ENCODE measurements at regions of chr9 and their contacts with region 1.

Region 1: GRCh38 chr9:134067904-134068743 is at the start of gene BRD3:
- DNase-seq: peak; percentile 60 to 95 (median 80)
- ATAC-seq: peak; percentile 77
- H3K4me3 ChIP-seq: peak within 1 kb of the TSS; percentile 74 to 89
- H3K4me3 Mint-ChIP-seq: peak within 1 kb of the TSS; percentile 87
- H3K27ac ChIP-seq: peak within 1 kb of the TSS; percentile 87 to 90
- H3K27ac Mint-ChIP-seq: peak within 1 kb of the TSS; percentile 96
- H3K4me1 ChIP-seq: peaks cover 12% of the 10 kb centered on the region
- H3K4me1 Mint-ChIP-seq: peaks cover 32% of the 10 kb centered on the region
- H3K27me3 ChIP-seq: peaks cover 4% of the 10 kb centered on the region in 2 experiments
- H3K27me3 Mint-ChIP-seq: peaks cover 21% of the 10 kb centered on the region
- CTCF ChIP-seq: no peak
- total RNA-seq, gene BRD3: 34.3 to 41.4 TPM

Region 2: GRCh38 chr9:133121198-133121939 is 946.8 kb before region 1 on chr9 and contains the start of gene RALGDS:
- CTCF ChIA-PET with region 1: no interaction called
- POLR2A ChIA-PET with region 1: no interaction called
- intact Hi-C with region 1: loop called in 1 of 2 experiments (anchors 2 kb)
- DNase-seq: peak; percentile 84 to 95 (median 92)
- ATAC-seq: peak; percentile 83
- H3K4me3 ChIP-seq: peak within 1 kb of the TSS; percentile 41 to 53
- H3K4me3 Mint-ChIP-seq: peak within 1 kb of the TSS; percentile 84
- H3K27ac ChIP-seq: peak within 1 kb of the TSS; percentile 66 to 96
- H3K27ac Mint-ChIP-seq: peak within 1 kb of the TSS; percentile 98
- H3K4me1 ChIP-seq: peaks cover 63% of the 10 kb centered on the region
- H3K4me1 Mint-ChIP-seq: peaks cover 70% of the 10 kb centered on the region
- H3K27me3 ChIP-seq: no peaks in the 10 kb centered on the region
- H3K27me3 Mint-ChIP-seq: no peaks in the 10 kb centered on the region
- CTCF ChIP-seq: no peak
- total RNA-seq, gene RALGDS: 177 to 186 TPM

Region 3: DNA sequence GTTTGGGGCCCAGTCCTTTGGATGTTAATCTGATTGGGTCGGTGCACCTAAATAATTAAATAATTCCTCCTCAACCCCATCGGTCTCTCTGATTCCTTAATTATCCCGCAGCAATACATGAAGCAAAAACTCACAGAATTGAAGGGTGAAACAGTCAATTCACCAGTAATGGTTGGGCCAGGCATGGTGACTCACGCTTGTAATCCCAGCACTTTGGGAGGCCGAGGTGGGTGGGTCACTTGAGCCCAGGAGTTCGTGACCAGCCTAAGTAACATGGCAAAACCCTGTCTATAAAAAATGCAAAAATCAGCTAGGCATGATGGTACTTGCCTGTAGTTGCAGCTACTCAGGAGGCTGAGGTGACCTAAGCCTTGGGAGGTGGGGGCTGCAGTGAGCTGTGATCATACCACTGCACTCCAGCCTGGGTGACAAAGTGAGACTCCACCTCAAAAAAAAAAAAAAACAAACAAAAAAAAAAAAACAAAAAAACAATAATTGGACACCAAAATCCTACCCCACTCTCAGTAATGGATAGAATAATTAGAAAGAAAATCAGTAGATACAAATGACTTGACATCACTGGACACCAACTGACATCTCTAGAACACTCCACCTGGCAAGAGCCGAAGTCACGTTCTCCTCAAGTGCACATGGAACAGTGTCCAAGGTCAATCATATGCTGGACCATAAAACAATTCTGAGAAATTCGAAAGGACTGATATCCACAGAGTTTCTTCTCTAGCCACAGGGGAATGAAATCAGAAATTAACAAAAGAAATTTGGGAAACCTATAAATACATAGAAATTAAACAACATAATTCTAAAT is 798.4 kb before region 1 on chr9:
- CTCF ChIA-PET with region 1: no interaction called
- POLR2A ChIA-PET with region 1: no interaction called
- intact Hi-C with region 1: no loop called
- DNase-seq: no peak
- ATAC-seq: no peak
- H3K4me3 ChIP-seq: no peak overlapping the region
- H3K4me3 Mint-ChIP-seq: no peak overlapping the region
- H3K27ac ChIP-seq: no peak overlapping the region
- H3K27ac Mint-ChIP-seq: no peak overlapping the region
- H3K4me1 ChIP-seq: peaks cover 6% of the 10 kb centered on the region
- H3K4me1 Mint-ChIP-seq: no peaks in the 10 kb centered on the region
- H3K27me3 ChIP-seq: no peaks in the 10 kb centered on the region
- H3K27me3 Mint-ChIP-seq: peaks cover 37% of the 10 kb centered on the region
- CTCF ChIP-seq: no peak

Region 4: DNA sequence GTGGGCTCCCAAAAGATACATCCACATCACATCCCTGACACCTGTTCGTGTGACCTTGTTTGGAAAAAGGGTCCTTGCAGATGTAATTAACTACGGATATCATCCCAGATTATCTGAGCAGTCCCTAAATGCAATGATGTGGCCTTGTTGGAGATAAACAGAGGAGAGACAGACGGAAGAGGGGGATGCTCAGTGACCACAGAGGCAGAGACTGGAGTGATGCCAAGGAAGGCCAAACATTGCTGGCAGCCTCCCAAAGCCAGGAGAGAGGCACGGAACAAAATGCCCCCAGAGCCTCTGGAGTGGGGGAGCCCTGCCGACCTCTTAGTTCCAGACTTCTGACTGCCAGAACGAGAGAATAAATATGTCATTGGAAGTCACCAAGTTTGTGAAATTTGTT is 61.0 kb before region 1 on chr9:
- CTCF ChIA-PET with region 1: no interaction called
- POLR2A ChIA-PET with region 1: no interaction called
- intact Hi-C with region 1: no loop called
- DNase-seq: no peak
- ATAC-seq: no peak
- H3K4me3 ChIP-seq: no peak overlapping the region
- H3K4me3 Mint-ChIP-seq: no peak overlapping the region
- H3K27ac ChIP-seq: no peak overlapping the region
- H3K27ac Mint-ChIP-seq: no peak overlapping the region
- H3K4me1 ChIP-seq: no peaks in the 10 kb centered on the region
- H3K4me1 Mint-ChIP-seq: no peaks in the 10 kb centered on the region
- H3K27me3 ChIP-seq: peaks cover 0 to 2% of the 10 kb centered on the region in 2 experiments
- H3K27me3 Mint-ChIP-seq: peaks cover 4% of the 10 kb centered on the region
- CTCF ChIP-seq: no peak

Region 5: DNA sequence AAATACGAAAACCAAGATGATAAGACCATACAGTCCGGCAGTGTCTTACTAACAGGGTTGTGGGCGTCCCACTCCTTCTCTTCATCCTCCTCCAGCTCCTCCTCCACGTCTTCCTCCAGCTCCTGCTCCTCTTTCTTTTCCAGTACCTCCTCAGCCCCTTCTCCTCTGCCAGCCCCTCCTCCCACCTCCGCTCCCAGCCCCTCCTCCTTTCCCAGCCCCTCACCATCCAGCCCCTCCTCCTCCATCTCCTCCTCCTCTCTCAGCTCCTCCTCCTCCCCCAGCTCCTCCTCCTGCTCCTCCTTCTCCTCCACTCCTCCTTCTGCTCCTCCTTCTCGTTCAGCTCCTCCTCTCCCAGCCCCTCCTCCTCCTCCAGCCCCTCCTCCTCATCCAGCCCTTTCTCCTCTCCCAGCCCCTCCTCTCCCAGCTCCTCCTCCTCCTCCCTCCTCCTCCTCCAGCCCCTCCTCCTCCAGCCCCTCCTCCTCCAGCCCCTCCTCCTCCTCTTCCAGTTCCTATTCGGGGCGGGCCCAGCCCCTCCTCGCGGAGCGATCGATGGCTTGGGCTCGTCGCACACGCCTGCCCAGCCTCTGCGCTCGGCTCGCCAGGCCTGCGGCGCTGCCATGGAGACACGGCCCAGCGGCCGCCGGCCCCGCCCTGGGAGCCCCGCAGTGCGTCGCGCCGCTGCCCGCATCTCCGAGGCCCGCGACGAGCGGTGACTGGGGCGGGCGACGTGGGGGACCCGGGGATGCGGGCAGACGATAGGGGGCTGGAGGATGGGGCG is 43.1 kb before region 1 on chr9 and contains the start of gene BRD3OS:
- CTCF ChIA-PET with region 1: no interaction called
- POLR2A ChIA-PET with region 1: interaction called, 12 read pairs
- intact Hi-C with region 1: loop called (anchors 1 kb)
- DNase-seq: peak; percentile 81 to 98 (median 90)
- ATAC-seq: peak; percentile 96
- H3K4me3 ChIP-seq: peak within 1 kb of the TSS; percentile 71 to 92
- H3K4me3 Mint-ChIP-seq: peak within 1 kb of the TSS; percentile 80
- H3K27ac ChIP-seq: peak within 1 kb of the TSS; percentile 56 to 65
- H3K27ac Mint-ChIP-seq: peak within 1 kb of the TSS; percentile 45
- H3K4me1 ChIP-seq: peaks cover 11% of the 10 kb centered on the region
- H3K4me1 Mint-ChIP-seq: peaks cover 11% of the 10 kb centered on the region
- H3K27me3 ChIP-seq: no peaks in the 10 kb centered on the region
- H3K27me3 Mint-ChIP-seq: no peaks in the 10 kb centered on the region
- CTCF ChIP-seq: no peak
- total RNA-seq, gene BRD3OS: 3.3 to 4.2 TPM

Region 6: DNA sequence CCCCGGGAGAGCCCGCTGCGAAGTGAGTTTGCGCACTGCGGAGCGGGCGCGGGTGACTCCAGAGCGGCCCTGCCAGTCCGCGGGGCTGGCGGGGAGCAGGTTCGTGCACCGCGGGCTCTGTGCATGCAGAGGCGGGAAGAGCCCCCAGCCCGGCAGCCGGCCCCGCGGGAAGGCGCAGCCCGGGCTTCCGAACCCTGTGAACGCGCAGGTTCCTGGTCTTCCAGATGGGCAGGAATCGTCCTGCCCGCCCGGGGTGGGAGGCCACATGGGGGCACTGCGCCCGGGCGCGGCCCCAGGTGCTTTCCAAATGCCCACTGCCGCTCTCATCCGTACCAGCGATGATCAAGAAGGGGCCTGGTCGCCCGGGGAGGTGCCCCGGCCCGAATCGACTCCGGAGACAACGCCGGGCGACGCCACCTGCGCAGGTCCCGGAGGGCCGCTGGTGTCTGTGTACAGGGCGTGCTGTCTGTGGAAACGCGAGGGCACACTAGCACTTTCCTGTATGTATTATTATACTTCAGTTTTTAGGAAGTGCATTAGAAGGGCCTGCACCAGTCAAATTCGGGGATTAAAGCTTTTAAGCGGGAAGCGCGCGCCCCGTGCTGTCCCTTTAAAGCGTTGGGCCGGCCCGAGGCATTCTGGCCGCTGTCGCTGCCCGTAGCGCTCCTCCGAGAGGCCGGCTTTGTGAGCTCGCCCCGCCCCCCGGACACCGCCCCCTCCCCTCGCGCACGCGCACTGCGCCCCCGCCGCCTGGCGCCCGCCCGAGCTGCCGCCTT is 67.4 kb after region 1 on chr9 and contains the start of gene WDR5:
- CTCF ChIA-PET with region 1: no interaction called
- POLR2A ChIA-PET with region 1: interaction called, 11 read pairs
- intact Hi-C with region 1: loop called in 1 of 2 experiments (anchors 1 kb)
- DNase-seq: peak; percentile 81 to 95 (median 90)
- ATAC-seq: peak; percentile 86
- H3K4me3 ChIP-seq: peak within 1 kb of the TSS; percentile 92 to 98
- H3K4me3 Mint-ChIP-seq: peak within 1 kb of the TSS; percentile 89
- H3K27ac ChIP-seq: peak within 1 kb of the TSS; percentile 77 to 90
- H3K27ac Mint-ChIP-seq: peak within 1 kb of the TSS; percentile 95
- H3K4me1 ChIP-seq: peaks cover 38% of the 10 kb centered on the region
- H3K4me1 Mint-ChIP-seq: peaks cover 43% of the 10 kb centered on the region
- H3K27me3 ChIP-seq: no peaks in the 10 kb centered on the region
- H3K27me3 Mint-ChIP-seq: no peaks in the 10 kb centered on the region
- CTCF ChIP-seq: no peak
- total RNA-seq, gene WDR5: 15.5 to 16.6 TPM

Region 7: DNA sequence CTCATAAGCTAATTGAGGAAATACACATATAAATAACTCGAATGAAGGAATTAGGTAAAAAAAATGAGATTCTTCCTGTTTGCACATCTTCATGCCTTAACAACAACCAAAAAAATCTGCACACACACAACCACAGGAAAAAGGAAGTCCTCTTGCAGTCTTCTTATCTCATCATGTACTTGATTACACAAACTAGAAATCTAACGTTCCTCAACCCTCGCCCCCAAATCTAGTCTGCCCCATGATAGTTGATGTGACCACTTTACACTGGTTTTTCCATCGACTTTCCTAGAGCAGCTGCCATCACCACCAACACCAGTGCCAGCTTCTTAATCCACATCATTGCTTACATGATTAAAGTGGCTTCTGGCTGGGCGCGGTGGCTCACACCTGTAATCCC is 127.4 kb after region 1 on chr9:
- CTCF ChIA-PET with region 1: no interaction called
- POLR2A ChIA-PET with region 1: no interaction called
- intact Hi-C with region 1: no loop called
- DNase-seq: peak in 2 of 9 experiments; percentile 12 to 32
- ATAC-seq: no peak
- H3K4me3 ChIP-seq: no peak overlapping the region
- H3K4me3 Mint-ChIP-seq: peak overlapping the region; percentile 20
- H3K27ac ChIP-seq: no peak overlapping the region
- H3K27ac Mint-ChIP-seq: peak overlapping the region; percentile 7
- H3K4me1 ChIP-seq: peaks cover 11% of the 10 kb centered on the region
- H3K4me1 Mint-ChIP-seq: peaks cover 18% of the 10 kb centered on the region
- H3K27me3 ChIP-seq: no peaks in the 10 kb centered on the region
- H3K27me3 Mint-ChIP-seq: no peaks in the 10 kb centered on the region
- CTCF ChIP-seq: no peak

Region 8: GRCh38 chr9:134325817-134326723 is 257.9 kb after region 1 on chr9 and contains the start of gene RXRA:
- CTCF ChIA-PET with region 1: no interaction called
- POLR2A ChIA-PET with region 1: no interaction called
- intact Hi-C with region 1: loop called (anchors 2 to 5 kb)
- DNase-seq: peak; percentile 37 to 87 (median 74)
- ATAC-seq: peak; percentile 69
- H3K4me3 ChIP-seq: peak within 1 kb of the TSS; percentile 68 to 93
- H3K4me3 Mint-ChIP-seq: peak within 1 kb of the TSS; percentile 75
- H3K27ac ChIP-seq: peak within 1 kb of the TSS in 1 of 2 experiments; percentile 33
- H3K27ac Mint-ChIP-seq: no peak within 1 kb of the TSS
- H3K4me1 ChIP-seq: peaks cover 16% of the 10 kb centered on the region
- H3K4me1 Mint-ChIP-seq: peaks cover 2% of the 10 kb centered on the region
- H3K27me3 ChIP-seq: no peaks in the 10 kb centered on the region
- H3K27me3 Mint-ChIP-seq: no peaks in the 10 kb centered on the region
- CTCF ChIP-seq: no peak
- total RNA-seq, gene RXRA: 11.6 to 13.7 TPM

Region 9: GRCh38 chr9:134455934-134456739 is 388.0 kb after region 1 on chr9:
- CTCF ChIA-PET with region 1: no interaction called
- POLR2A ChIA-PET with region 1: no interaction called
- intact Hi-C with region 1: loop called in 1 of 2 experiments (anchors 5 kb)
- DNase-seq: peak; percentile 54 to 90 (median 76)
- ATAC-seq: peak; percentile 92
- H3K4me3 ChIP-seq: peak overlapping the region; percentile 50 to 60
- H3K4me3 Mint-ChIP-seq: peak overlapping the region; percentile 86
- H3K27ac ChIP-seq: peak overlapping the region; percentile 82 to 97
- H3K27ac Mint-ChIP-seq: peak overlapping the region; percentile 93
- H3K4me1 ChIP-seq: peaks cover 18% of the 10 kb centered on the region
- H3K4me1 Mint-ChIP-seq: peaks cover 8% of the 10 kb centered on the region
- H3K27me3 ChIP-seq: no peaks in the 10 kb centered on the region
- H3K27me3 Mint-ChIP-seq: no peaks in the 10 kb centered on the region
- CTCF ChIP-seq: no peak